IMR-90 (cell line): ENCODE measurements at regions of chr5 and their contacts with region 1.

Region 1: GRCh38 chr5:161585798-161586197 is 39.3 kb upstream of the GABRB2 start:
- DNase-seq: no peak
- ATAC-seq: no peak
- H3K4me3 ChIP-seq: no peak overlapping the region
- H3K27ac ChIP-seq: no peak overlapping the region
- H3K4me1 ChIP-seq: no peaks in the 10 kb centered on the region
- H3K27me3 ChIP-seq: no peaks in the 10 kb centered on the region
- CTCF ChIP-seq: no peak
- POLR2A ChIP-seq: no peak
- RAD21 ChIP-seq: no peak

Region 2: GRCh38 chr5:161112371-161112770 is 473.4 kb before region 1 on chr5:
- CTCF ChIA-PET with region 1: no interaction called
- POLR2A ChIA-PET with region 1: no interaction called
- dilution Hi-C with region 1: no loop called
- in situ Hi-C with region 1: no loop called
- intact Hi-C with region 1: no loop called
- DNase-seq: no peak
- ATAC-seq: no peak
- H3K4me3 ChIP-seq: no peak overlapping the region
- H3K27ac ChIP-seq: no peak overlapping the region
- H3K4me1 ChIP-seq: no peaks in the 10 kb centered on the region
- H3K27me3 ChIP-seq: no peaks in the 10 kb centered on the region
- CTCF ChIP-seq: no peak
- POLR2A ChIP-seq: no peak
- RAD21 ChIP-seq: no peak

Region 3: GRCh38 chr5:161614342-161614741 is 28.5 kb after region 1 on chr5:
- CTCF ChIA-PET with region 1: no interaction called
- POLR2A ChIA-PET with region 1: no interaction called
- dilution Hi-C with region 1: no loop called
- in situ Hi-C with region 1: no loop called
- intact Hi-C with region 1: loop called (anchors 1 kb)
- DNase-seq: no peak
- ATAC-seq: no peak
- H3K4me3 ChIP-seq: no peak overlapping the region
- H3K27ac ChIP-seq: no peak overlapping the region
- H3K4me1 ChIP-seq: no peaks in the 10 kb centered on the region
- H3K27me3 ChIP-seq: no peaks in the 10 kb centered on the region
- CTCF ChIP-seq: no peak
- POLR2A ChIP-seq: no peak
- RAD21 ChIP-seq: no peak

Region 4: GRCh38 chr5:161783297-161783696 is 197.5 kb after region 1 on chr5:
- CTCF ChIA-PET with region 1: no interaction called
- POLR2A ChIA-PET with region 1: no interaction called
- dilution Hi-C with region 1: no loop called
- in situ Hi-C with region 1: no loop called
- intact Hi-C with region 1: no loop called
- DNase-seq: no peak
- ATAC-seq: no peak
- H3K4me3 ChIP-seq: no peak overlapping the region
- H3K27ac ChIP-seq: no peak overlapping the region
- H3K4me1 ChIP-seq: no peaks in the 10 kb centered on the region
- H3K27me3 ChIP-seq: no peaks in the 10 kb centered on the region
- CTCF ChIP-seq: no peak
- POLR2A ChIP-seq: no peak
- RAD21 ChIP-seq: no peak